ENCODE measurements at regions of chr18 and their contacts with region 1.

Region 1: DNA sequence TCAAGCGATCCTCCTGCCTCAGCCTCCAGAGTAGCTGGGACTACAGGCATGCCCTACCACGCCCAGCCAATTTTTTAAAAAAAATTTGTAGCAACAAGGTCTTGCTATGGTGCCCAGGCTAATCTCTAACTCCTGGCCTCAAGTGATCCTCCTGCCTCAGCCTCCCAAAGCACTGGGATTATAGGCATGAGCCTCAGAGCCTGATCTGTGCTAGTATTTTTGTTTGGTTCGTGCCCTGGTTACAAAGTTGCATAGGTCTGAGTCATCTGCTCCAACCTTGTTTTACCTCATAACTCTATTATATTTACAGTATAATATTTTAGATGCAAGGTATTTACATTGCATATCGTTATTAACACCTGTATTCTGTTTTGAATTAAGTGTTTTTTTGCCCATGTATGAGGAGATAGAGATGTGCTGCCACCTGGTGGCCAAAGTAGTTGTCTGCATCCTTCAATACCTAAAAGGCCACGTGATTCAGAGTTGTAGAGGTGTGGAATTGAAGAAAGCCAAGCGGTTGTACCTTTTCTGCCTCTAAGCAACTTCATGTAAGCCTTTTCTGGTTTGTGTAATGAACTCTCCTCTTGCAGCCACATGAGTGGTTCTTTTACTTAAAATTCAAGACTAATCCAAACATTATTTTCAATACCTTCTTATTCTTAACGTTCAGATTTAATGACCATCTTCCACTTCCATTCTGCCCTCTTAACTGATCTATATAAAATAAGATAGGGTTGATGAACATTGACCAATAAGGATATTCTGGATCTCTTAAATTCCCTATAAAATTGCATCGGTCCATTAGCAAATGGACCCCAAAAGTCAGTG is 19.9 kb upstream of the CABYR start:
- DNase-seq: peak; percentile 56
- ATAC-seq: peak; percentile 93
- H3K4me3 ChIP-seq: no peak overlapping the region
- H3K27ac ChIP-seq: no peak overlapping the region
- H3K4me1 ChIP-seq: no peaks in the 10 kb centered on the region
- H3K27me3 ChIP-seq: no peaks in the 10 kb centered on the region
- CTCF ChIP-seq: peak; percentile 64 to 78 (median 77)
- EP300 ChIP-seq: no peak
- POLR2A ChIP-seq: no peak
- RAD21 ChIP-seq: peak; percentile 86

Region 2: GRCh38 chr18:23805898-23806297 is 313.1 kb before region 1 on chr18:
- CTCF ChIA-PET with region 1: no interaction called
- POLR2A ChIA-PET with region 1: no interaction called
- RAD21 ChIA-PET with region 1: no interaction called
- SMC1A ChIA-PET with region 1: no interaction called
- in situ Hi-C with region 1: no loop called
- intact Hi-C with region 1: no loop called
- DNase-seq: no peak
- ATAC-seq: no peak
- H3K4me3 ChIP-seq: no peak overlapping the region
- H3K27ac ChIP-seq: no peak overlapping the region
- H3K4me1 ChIP-seq: peaks cover 10% of the 10 kb centered on the region
- H3K27me3 ChIP-seq: peaks cover 0 to 5% of the 10 kb centered on the region in 2 experiments; a peak in 1 of 4 replicates
- CTCF ChIP-seq: no peak
- EP300 ChIP-seq: no peak
- POLR2A ChIP-seq: no peak
- RAD21 ChIP-seq: no peak

Region 3: DNA sequence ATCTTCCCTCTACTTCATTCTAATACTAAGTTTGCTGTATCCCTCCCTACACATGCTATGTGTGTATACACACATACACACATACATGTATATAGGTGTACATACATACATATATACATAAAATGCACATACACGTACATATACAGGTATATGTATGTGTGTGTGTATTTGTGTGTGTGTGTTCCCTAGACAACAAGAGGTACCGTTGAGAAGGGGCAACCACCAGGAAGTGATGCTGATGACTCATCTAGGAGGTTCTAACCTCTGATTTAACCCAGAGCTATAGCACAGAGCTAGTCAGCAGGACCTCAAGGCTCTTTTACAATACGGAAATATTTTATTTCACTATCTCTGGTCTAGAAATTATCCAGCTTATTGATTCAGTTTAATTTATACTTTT is 290.5 kb before region 1 on chr18:
- CTCF ChIA-PET with region 1: interaction called, 6 read pairs
- POLR2A ChIA-PET with region 1: no interaction called
- RAD21 ChIA-PET with region 1: interaction called, 3 read pairs
- SMC1A ChIA-PET with region 1: interaction called, 5 read pairs
- in situ Hi-C with region 1: loop called (anchors 5 kb)
- intact Hi-C with region 1: loop called (anchors 5 kb)
- DNase-seq: no peak
- ATAC-seq: peak; percentile 96
- H3K4me3 ChIP-seq: no peak overlapping the region
- H3K27ac ChIP-seq: no peak overlapping the region
- H3K4me1 ChIP-seq: no peaks in the 10 kb centered on the region
- H3K27me3 ChIP-seq: no peaks in the 10 kb centered on the region
- CTCF ChIP-seq: no peak
- EP300 ChIP-seq: no peak
- POLR2A ChIP-seq: no peak
- RAD21 ChIP-seq: no peak

Region 4: GRCh38 chr18:23837591-23837990 is 281.4 kb before region 1 on chr18:
- CTCF ChIA-PET with region 1: no interaction called
- POLR2A ChIA-PET with region 1: no interaction called
- RAD21 ChIA-PET with region 1: no interaction called
- SMC1A ChIA-PET with region 1: no interaction called
- in situ Hi-C with region 1: loop called (anchors 5 kb)
- intact Hi-C with region 1: no loop called
- DNase-seq: no peak
- ATAC-seq: peak; percentile 66
- H3K4me3 ChIP-seq: no peak overlapping the region
- H3K27ac ChIP-seq: no peak overlapping the region
- H3K4me1 ChIP-seq: no peaks in the 10 kb centered on the region
- H3K27me3 ChIP-seq: no peaks in the 10 kb centered on the region
- CTCF ChIP-seq: no peak
- EP300 ChIP-seq: no peak
- POLR2A ChIP-seq: no peak
- RAD21 ChIP-seq: no peak